KBM-7 (cell line): ENCODE measurements at regions of chrX and their contacts with region 1.

Region 1: DNA sequence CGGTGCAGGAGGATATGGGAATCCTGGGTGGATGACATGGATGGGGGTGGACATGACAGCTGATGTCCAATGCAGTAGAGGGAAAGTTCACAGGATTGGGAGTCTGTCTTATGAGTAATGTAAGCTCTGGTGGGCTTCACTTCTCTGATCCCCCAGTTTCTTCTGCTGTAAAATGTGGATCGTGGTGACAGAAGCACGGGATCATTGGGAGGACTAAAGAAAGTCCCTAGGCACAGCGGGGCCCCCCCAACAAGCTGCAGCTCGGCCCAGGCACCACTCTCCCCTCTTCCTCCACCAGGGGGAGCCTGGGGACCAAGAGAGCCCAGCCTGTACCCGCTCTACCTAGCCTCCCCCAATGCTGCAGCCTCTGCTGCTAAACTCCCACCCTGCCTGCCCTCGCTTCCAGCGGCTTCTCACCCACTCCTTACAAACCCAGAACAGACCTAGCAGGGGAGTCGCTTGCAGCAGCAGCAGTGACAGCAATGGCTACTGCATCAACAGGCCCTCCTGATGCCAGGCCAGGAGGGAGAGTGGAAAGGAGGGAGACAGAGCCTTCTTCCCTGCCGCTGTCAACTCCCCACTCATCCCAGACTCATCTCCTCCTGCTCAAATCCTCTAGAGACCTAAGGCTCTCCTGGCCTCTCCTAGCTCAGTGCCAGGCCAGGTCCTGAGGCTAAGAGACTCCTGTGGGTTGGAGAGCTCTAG is 36.1 kb upstream of the IQSEC2 start:
- DNase-seq: peak; percentile 83

Region 2: DNA sequence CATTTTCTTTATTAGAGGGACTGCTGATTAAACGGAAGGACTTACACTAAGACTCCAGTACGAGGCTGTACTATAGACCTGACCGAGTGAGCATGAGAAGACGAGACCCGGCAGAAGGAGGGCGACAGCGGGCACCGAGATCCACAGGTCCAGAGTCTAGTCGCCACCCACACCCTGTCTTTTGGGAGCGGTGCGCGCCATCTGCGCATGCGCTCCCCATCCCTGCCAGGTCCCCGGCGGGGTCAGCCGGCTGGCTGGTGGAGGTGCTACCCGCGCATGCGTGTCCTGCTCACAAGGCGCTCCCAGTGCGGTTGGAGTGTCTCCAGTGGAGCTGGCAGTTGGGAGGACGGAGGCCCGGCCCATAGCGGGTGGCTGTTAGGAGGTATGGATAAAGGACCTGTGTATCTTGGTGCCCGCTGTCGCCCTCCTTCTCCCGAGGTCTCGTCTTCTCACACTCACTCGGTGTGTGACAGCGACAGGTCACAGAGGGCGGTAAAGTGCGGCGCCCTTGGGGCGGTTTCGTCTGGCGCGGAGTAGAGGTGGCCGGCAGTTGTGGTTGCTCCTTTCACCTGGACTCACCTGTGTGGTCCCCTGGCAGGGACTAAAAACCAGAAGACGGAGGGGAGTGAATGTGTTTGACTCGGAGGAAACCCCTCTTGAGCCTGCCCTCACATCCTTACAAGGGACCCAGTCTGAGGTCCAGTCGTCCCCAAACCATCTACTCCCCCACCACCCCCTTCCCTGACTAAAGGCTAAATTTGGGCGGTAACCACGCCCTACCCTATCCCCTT is 124.2 kb after region 1 on chrX:
- in situ Hi-C with region 1: loop called (anchors 10 kb)
- DNase-seq: peak; percentile 79

Region 3: GRCh38 chrX:53474707-53475106 is 157.2 kb after region 1 on chrX:
- in situ Hi-C with region 1: no loop called
- DNase-seq: peak; percentile 89